ENCODE measurements at regions of chr19 and their contacts with region 1.

Region 1: DNA sequence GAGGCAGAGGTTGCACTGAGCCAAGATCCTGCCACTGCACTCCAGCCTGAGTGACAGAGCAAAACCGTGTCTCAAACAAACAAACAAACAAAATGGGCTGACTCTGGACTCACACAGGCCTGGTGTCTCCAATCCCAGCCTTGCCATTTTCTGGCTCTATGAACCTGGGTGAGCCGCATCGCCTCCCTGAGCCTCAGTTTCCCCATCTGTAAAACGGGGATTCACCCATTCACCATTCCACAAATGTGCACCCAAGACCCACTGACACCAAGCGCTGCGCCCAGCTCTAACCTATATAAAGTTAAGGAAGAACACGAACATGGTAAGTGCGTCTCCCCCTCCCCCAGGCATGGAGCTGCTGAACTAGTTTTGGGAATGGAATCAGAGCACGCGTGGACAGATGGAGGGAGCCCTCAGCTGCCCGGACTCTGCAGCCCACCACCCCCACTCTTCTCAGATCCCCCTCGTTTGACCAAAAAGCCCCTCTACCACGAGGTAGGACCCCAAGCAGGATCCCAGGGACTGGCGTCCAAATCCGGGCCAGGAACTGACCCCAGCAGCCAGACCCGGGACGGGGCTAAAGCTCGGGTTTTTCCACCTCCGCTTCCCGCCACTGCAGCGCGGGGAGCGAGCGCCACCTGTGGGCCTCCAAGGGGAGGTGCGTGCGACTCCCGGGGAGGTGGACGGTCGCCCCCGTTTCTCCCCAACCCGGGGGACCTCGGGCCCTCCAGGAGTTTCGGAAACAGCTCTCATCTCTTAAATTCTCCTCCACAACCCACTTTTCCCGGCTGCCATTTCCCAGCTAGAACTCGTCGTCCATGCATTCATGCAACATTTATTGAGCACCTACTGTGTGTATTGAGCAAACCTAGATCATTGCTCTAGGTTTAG is 33.0 kb upstream of the ADGRE5 start:
- H3K4me3 ChIP-seq: peak overlapping the region; percentile 33
- H3K27ac ChIP-seq: no peak overlapping the region
- H3K4me1 ChIP-seq: no peaks in the 10 kb centered on the region
- CTCF ChIP-seq: peak; percentile 89

Region 2: DNA sequence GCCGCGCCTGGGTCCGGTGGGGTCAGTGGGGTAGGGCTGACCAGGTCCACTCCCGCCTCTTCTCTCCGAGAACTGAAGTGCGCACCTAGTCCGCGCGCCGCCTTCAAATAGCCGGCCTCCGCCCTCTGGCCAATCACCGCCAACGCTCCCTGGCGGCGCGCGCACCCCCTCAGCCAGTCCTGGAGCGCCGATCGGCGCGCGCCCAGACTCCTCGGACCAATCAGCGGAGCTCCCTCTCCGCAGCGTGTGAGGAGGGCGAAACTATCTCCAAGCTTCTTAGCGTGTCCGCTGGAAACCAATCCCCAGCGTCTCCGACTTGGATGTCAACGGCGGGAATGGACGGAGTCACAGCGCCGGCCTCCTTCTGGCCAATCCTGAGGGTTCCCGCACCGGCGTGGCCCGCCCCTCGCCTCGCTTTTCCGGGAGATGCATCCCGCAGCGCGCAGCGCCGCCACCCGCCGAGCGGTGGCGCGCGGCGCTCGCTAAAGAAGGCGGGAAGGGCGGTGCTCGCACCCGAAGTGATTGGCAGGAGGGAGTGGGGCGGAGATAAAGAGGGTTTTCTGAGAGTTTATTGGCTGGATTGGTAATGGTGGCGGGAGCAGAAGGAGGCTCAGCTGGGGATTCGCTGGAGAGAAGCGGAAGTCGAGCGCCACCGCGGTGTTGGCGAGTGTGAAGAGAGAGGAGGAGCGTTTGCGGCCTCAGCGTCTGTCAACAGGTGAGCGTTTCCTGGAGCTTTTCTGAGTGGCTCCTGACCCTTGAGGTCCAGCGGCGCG is 211.5 kb before region 1 on chr19 and contains the start of gene ASF1B:
- CTCF ChIA-PET with region 1: interaction called, 31 read pairs
- POLR2A ChIA-PET with region 1: interaction called, 8 read pairs
- H3K4me3 ChIP-seq: peak within 1 kb of the TSS; percentile 90
- H3K27ac ChIP-seq: peak within 1 kb of the TSS; percentile 85
- H3K4me1 ChIP-seq: no peaks in the 10 kb centered on the region
- CTCF ChIP-seq: peak; percentile 99

Region 3: GRCh38 chr19:14198384-14199376 is 149.6 kb before region 1 on chr19:
- CTCF ChIA-PET with region 1: interaction called, 74 read pairs
- POLR2A ChIA-PET with region 1: no interaction called
- H3K4me3 ChIP-seq: no peak overlapping the region
- H3K27ac ChIP-seq: no peak overlapping the region
- H3K4me1 ChIP-seq: no peaks in the 10 kb centered on the region
- CTCF ChIP-seq: no peak

Region 4: DNA sequence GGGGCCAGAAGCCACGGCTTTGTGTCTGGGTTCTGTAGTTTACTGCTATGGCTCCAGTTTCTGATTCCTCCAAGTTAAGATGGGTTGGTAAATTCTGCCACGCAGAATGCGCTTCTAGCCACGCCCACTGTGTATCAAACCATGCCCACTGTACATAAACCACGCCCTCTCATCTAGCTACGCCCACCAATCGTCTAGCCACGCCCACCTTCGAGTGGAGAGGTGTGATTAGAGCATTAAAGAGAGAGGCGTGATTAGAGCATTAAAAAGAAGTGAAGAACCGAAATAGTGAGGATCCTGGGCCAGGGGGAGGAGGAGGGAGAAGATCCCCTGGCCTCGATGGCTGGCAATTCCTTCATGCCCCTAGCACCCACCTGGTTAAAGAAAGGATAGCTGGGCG is 10.7 kb before region 1 on chr19:
- CTCF ChIA-PET with region 1: interaction called, 26 read pairs
- POLR2A ChIA-PET with region 1: no interaction called
- H3K4me3 ChIP-seq: no peak overlapping the region
- H3K27ac ChIP-seq: no peak overlapping the region
- H3K4me1 ChIP-seq: no peaks in the 10 kb centered on the region
- CTCF ChIP-seq: no peak

Region 5: DNA sequence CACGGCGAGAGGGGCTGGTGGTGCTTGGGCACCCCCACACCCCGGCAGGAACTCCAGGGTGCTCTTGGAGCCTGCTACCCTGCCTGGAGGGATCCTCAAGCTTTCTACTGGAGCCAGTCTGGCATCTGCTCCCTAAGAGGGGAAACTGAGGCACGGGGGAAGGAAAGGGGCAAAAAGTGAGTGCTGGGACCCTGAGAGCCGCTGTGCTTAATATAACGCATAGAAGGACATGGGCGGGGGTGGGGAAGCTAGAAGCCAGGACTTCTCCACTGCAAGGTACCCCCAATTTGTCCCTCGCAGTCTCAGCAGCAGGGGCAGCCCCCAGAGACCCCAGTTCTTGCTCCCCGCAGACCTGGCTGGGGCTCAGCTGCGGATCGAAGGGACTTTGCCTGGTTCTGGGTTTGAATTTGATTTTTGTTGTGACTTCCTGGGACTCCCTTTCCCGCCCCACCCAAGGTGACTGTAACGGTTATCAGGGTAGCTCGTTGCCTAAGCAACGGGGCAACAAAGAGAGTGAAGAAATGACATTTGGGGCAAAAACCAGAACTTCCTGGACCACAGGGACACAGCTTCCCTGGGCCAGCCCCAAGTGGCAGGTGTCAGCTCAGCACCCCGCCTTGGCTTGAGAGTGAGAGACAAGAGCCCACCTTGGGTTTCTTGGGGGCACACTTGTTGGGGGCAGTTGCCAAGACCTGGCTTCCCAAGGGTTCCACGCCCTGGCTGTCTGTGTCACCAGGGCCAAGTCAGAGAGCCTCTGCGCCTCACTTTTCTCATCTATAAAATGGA is 33.6 kb after region 1 on chr19:
- CTCF ChIA-PET with region 1: interaction called, 19 read pairs
- POLR2A ChIA-PET with region 1: interaction called, 4 read pairs
- H3K4me3 ChIP-seq: peak overlapping the region; percentile 47
- H3K27ac ChIP-seq: peak overlapping the region; percentile 7; the same call in 1 of the 2 replicates
- H3K4me1 ChIP-seq: 0 out of 2 replicates have a peak, but pooled peaks cover 2% of the 10 kb centered on the region
- CTCF ChIP-seq: no peak